ENCODE measurements at regions of chr5 and their contacts with region 1.

Region 1: DNA sequence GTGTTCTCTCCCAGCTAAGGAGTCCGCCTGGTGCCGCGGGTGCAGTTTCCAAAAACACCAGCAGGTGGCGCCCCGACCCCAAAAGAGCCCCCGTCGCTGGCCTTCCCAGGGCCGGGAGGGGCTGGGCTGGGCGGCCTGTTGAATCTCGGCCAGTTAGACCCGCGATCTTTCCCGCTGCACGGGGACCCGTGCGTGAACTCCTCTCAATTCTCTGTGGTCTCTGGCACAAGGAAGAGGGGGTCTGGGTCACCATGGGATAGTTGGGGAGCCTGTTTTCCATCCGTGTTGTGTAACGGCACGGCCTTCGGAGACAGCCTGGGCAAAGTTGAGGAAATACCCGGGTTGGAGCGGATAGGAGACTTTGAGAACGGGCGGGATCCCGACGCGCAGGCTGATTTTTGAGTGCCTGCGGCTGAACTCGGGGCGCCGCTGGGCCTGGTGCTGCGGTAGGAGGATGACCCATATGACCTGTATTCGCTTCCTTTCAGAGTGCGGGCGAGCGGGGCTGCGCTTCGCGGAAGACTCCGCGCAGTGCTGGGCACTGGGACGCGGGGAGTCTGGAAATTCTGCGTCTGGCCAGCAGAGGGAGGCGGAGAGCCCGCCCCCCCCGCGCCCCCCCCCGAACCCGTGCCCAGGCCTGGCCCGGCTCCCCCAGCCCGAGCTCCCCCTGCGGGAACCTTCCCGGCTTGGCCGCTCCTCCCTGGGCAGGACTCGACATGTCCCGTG is 7.9 kb upstream of the PSD2 start:
- DNase-seq: peak; percentile 36 to 90 (median 76)
- ATAC-seq: peak; percentile 85 to 88 (median 86)
- H3K4me3 ChIP-seq: peak overlapping the region; percentile 48 to 78
- H3K4me3 Mint-ChIP-seq: peak overlapping the region; percentile 80 to 85 (median 80)
- H3K27ac ChIP-seq: no peak overlapping the region
- H3K27ac Mint-ChIP-seq: no peak overlapping the region
- H3K4me1 ChIP-seq: peaks cover 2 to 16% of the 10 kb centered on the region in 2 experiments
- H3K4me1 Mint-ChIP-seq: peaks cover 4 to 11% (median 5%) of the 10 kb centered on the region in 3 donors
- H3K27me3 ChIP-seq: peaks cover 0 to 48% of the 10 kb centered on the region in 2 experiments
- H3K27me3 Mint-ChIP-seq: peaks cover 25 to 42% of the 10 kb centered on the region in 2 donors

Region 2: GRCh38 chr5:139439013-139439903 is 348.5 kb before region 1 on chr5 and contains the start of gene DNAJC18:
- CTCF ChIA-PET with region 1: no interaction called
- POLR2A ChIA-PET with region 1: no interaction called
- DNase-seq: peak; percentile 77 to 92 (median 87)
- ATAC-seq: peak; percentile 89 to 93 (median 92)
- H3K4me3 ChIP-seq: peak within 1 kb of the TSS; percentile 83 to 90
- H3K4me3 Mint-ChIP-seq: peak within 1 kb of the TSS; percentile 86 to 99 (median 98)
- H3K27ac ChIP-seq: peak within 1 kb of the TSS; percentile 99
- H3K27ac Mint-ChIP-seq: peak within 1 kb of the TSS; percentile 99 to 100
- H3K4me1 ChIP-seq: peaks cover 22 to 27% of the 10 kb centered on the region in 2 experiments
- H3K4me1 Mint-ChIP-seq: peaks cover 44 to 56% (median 46%) of the 10 kb centered on the region in 3 donors
- H3K27me3 ChIP-seq: peaks cover 0 to 2% of the 10 kb centered on the region in 2 experiments
- H3K27me3 Mint-ChIP-seq: no peaks in the 10 kb centered on the region
- total RNA-seq, gene DNAJC18: 4.7 to 7.2 (median 6.4) TPM

Region 3: DNA sequence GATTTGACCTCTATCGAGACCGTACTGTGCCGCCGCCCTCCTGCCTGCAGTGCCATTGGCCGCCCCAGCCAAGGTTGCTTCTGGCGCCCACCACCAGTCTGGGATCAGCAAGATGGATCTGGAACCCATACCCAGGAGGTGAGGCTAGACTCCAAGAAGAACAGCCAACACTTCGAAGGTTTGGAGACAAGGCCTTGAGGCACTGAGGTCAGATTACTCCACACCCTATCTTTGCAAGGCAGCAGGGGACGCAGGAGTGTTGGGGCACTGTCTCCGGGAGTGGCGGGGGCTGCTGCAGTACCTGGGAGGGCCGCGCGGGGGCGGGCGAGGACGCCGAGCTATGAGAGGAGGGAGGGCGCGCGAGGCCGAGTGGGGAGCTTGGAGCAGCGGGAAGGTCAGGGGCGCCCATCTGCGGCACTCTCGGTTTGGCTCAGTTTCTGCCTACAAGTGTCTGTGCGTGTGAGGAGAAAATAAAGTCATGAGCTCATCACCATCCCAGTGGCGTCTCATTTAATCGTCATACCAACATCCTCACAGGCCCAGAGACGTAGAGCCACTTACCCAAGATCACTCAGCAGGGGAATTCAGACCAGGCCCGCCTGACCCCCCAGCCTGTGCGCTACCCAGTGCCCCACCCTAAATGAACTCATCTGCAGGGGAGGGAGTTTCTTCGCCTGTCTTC is 12.6 kb before region 1 on chr5:
- CTCF ChIA-PET with region 1: interaction called, 5 to 26 read pairs
- POLR2A ChIA-PET with region 1: no interaction called
- DNase-seq: peak; percentile 31 to 82 (median 70)
- ATAC-seq: peak; percentile 97
- H3K4me3 ChIP-seq: no peak overlapping the region
- H3K4me3 Mint-ChIP-seq: peak overlapping the region in 1 of 3 donors; percentile 51
- H3K27ac ChIP-seq: no peak overlapping the region
- H3K27ac Mint-ChIP-seq: no peak overlapping the region
- H3K4me1 ChIP-seq: peaks cover 0 to 8% of the 10 kb centered on the region in 2 experiments
- H3K4me1 Mint-ChIP-seq: peaks cover 3 to 9% (median 7%) of the 10 kb centered on the region in 3 donors
- H3K27me3 ChIP-seq: peaks cover 0 to 32% of the 10 kb centered on the region in 2 experiments
- H3K27me3 Mint-ChIP-seq: peaks cover 11 to 12% of the 10 kb centered on the region in 2 donors

Region 4: DNA sequence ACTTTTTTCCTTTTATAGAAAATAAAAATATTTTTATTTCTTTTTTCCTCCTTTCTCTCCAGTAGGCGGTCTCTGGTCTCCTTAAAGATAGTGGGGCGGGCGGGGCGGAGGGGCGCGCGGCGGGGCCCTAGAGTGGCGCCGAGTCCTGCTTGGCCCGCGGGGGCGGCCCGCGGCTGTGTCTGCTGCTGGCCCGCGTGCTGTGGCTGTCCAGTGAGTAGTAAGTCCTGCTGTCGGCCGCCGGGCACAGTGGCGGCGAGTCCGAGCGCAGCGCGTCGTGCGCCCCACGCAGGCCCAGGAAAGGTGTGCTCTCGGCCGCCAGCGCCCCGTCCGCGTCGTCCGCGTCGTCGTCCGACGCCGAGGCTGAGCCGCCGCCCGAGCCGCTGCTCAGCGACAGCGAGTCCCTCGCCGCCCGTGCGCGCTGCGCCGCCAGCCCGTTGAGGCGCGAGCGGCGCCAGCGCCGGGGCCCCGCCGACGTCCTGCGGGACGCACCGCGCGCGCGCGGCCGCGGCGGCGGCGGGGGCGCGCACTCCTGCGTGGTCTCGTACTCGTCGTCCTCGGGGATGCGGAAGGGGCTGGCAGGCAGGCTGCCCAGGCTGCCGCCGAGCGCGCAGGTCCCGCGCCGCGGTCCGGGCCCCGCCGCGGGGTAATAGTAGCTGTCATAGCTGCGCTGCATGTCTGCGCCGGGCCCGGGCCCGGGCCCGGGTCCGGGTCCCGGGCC is 60.2 kb after region 1 on chr5:
- CTCF ChIA-PET with region 1: interaction called, 6 to 16 read pairs
- POLR2A ChIA-PET with region 1: no interaction called
- DNase-seq: peak; percentile 59 to 90 (median 78)
- ATAC-seq: peak; percentile 90 to 93 (median 90)
- H3K4me3 ChIP-seq: peak overlapping the region; percentile 56 to 70
- H3K4me3 Mint-ChIP-seq: peak overlapping the region; percentile 50 to 64 (median 59)
- H3K27ac ChIP-seq: no peak overlapping the region
- H3K27ac Mint-ChIP-seq: no peak overlapping the region
- H3K4me1 ChIP-seq: peaks cover 0 to 16% of the 10 kb centered on the region in 2 experiments
- H3K4me1 Mint-ChIP-seq: peaks cover 9 to 25% (median 16%) of the 10 kb centered on the region in 3 donors
- H3K27me3 ChIP-seq: peaks cover 2 to 33% of the 10 kb centered on the region in 2 experiments
- H3K27me3 Mint-ChIP-seq: peaks cover 14 to 23% of the 10 kb centered on the region in 2 donors

Region 5: DNA sequence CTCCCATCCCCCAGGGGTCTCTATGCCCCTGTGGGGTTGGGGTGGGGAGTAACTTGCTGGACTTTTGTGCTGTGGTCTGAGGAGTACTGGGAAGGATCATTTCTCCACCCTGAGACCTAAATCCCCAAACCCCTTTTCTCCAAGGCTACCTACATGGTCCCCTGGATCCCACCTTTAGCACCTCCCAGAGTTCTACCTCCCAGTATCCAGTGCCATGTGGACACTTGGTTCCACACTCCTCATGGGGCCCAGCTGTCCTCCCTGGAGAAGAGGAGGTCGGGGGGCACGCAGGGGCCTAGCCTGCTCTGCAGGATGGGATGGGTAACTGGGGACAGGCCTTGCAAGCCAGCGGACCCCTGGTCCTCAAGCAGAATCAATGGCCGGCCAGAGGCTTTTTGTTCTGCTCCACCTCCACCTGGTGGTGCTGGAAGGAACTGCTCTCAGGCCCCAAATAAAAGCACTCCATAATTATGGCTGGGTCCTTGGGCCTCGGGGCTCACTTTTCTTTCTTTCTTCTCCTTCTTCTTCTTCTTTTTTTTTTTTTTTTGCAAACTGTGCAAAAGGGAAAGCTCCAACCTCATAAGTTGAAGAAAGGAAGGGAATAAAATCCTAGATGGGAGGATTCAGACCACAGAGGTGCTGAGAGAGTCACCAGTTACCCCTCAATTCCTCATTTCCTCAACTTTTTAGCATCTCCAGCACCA is 76.3 kb after region 1 on chr5:
- CTCF ChIA-PET with region 1: interaction called, 4 to 19 read pairs
- POLR2A ChIA-PET with region 1: no interaction called
- DNase-seq: peak in 30 of 35 experiments; percentile 8 to 70 (median 40)
- ATAC-seq: peak; percentile 62 to 69 (median 62)
- H3K4me3 ChIP-seq: no peak overlapping the region
- H3K4me3 Mint-ChIP-seq: no peak overlapping the region
- H3K27ac ChIP-seq: no peak overlapping the region
- H3K27ac Mint-ChIP-seq: no peak overlapping the region
- H3K4me1 ChIP-seq: no peaks in the 10 kb centered on the region
- H3K4me1 Mint-ChIP-seq: no peaks in the 10 kb centered on the region
- H3K27me3 ChIP-seq: peaks cover 0 to 39% of the 10 kb centered on the region in 2 experiments
- H3K27me3 Mint-ChIP-seq: peaks cover 16 to 24% of the 10 kb centered on the region in 2 donors

Region 6: GRCh38 chr5:139968547-139969261 is 181.0 kb after region 1 on chr5:
- CTCF ChIA-PET with region 1: interaction called, 34 to 63 read pairs
- POLR2A ChIA-PET with region 1: no interaction called
- DNase-seq: peak; percentile 64 to 90 (median 82)
- ATAC-seq: peak; percentile 98 to 99 (median 98)
- H3K4me3 ChIP-seq: no peak overlapping the region
- H3K4me3 Mint-ChIP-seq: no peak overlapping the region
- H3K27ac ChIP-seq: no peak overlapping the region
- H3K27ac Mint-ChIP-seq: no peak overlapping the region
- H3K4me1 ChIP-seq: peaks cover 0 to 4% of the 10 kb centered on the region in 2 experiments
- H3K4me1 Mint-ChIP-seq: peaks cover 0 to 3% (median 0%) of the 10 kb centered on the region in 3 donors
- H3K27me3 ChIP-seq: peaks cover 8 to 21% of the 10 kb centered on the region in 2 experiments
- H3K27me3 Mint-ChIP-seq: peaks cover 16 to 24% of the 10 kb centered on the region in 2 donors

Measured in T-cell (primary cell).